Activated CD4-positive, alpha-beta memory T cell treated with anti-CD3 and anti-CD28 coated beads, Interleukin-2, amount 10 ng/mL, durations not matched to agents 7 days and 5 days (primary cell): ENCODE measurements at regions of chr11 and their contacts with region 1.

Region 1: GRCh38 chr11:114180301-114181055 is 115.7 kb upstream of the NNMT start:
- DNase-seq: no peak
- H3K4me3 Mint-ChIP-seq: no peak overlapping the region
- H3K27ac Mint-ChIP-seq: no peak overlapping the region
- H3K4me1 Mint-ChIP-seq: peaks cover 70% of the 10 kb centered on the region
- H3K27me3 Mint-ChIP-seq: peaks cover 1% of the 10 kb centered on the region

Region 2: DNA sequence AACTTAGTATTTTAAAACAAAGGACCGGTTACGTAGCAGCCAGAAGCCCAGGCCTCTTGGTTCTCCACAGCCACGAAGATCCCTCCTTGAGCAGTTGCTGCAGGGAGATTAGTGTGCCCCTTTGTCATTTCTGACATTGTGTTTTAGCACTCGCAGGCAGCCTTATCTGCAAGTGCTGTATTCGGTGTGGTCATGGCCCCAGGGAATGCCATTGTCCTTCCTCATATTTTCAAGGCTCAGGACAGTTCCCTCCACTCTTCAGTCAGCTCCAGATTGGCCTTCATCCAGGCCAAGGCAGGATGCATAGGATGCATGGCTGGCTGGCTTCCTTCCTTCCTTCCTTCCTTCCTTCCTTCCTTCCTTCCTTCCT is 32.5 kb before region 1 on chr11:
- CTCF ChIA-PET with region 1: no interaction called
- POLR2A ChIA-PET with region 1: no interaction called
- DNase-seq: no peak
- H3K4me3 Mint-ChIP-seq: no peak overlapping the region
- H3K27ac Mint-ChIP-seq: no peak overlapping the region
- H3K4me1 Mint-ChIP-seq: peaks cover 31% of the 10 kb centered on the region
- H3K27me3 Mint-ChIP-seq: peaks cover 14% of the 10 kb centered on the region

Region 3: DNA sequence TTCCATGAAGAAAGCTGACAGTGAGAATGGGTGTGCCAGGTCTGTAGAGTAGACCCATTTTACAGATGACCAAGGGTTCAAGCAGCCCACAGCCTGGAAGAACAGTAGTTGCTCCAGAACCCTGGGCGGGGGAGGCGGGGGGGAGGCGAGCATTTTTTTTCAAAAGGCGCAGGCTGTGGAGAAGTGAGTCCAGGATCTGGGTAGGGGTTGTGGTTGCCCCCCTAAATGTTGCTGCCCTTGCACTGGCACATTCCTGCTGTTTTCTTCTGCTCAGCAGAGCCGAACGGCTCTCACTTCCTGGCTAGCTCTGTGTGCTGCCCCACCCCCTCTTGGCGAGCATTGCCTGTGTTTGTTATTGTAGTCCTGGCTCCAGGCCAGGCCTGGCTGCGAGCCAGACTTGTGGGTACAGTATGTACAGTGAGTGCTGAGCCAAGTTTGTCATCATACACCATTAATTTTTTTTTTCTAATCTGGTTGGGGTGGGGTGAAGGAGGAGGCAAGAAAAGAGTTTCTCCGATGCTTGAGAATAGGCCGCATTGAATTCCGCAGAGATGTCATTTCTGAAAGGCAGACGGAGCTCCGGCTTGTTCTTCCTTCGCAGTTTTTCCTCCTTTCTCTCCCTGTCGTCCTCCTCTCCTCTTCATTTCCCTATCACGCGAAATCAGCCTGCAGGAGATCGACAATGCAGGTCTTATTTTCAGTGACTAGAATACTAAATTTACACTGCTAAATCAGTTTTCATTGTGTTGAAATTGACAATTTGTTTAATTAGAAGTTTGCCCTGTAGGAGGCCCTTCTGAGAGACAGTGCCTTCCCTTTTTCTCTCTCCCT is 20.5 kb before region 1 on chr11:
- CTCF ChIA-PET with region 1: interaction called, 5 read pairs
- POLR2A ChIA-PET with region 1: interaction called, 17 read pairs
- DNase-seq: peak; percentile 97
- H3K4me3 Mint-ChIP-seq: peak overlapping the region; percentile 49
- H3K27ac Mint-ChIP-seq: peak overlapping the region; percentile 75
- H3K4me1 Mint-ChIP-seq: peaks cover 49% of the 10 kb centered on the region
- H3K27me3 Mint-ChIP-seq: peaks cover 3% of the 10 kb centered on the region

Region 4: DNA sequence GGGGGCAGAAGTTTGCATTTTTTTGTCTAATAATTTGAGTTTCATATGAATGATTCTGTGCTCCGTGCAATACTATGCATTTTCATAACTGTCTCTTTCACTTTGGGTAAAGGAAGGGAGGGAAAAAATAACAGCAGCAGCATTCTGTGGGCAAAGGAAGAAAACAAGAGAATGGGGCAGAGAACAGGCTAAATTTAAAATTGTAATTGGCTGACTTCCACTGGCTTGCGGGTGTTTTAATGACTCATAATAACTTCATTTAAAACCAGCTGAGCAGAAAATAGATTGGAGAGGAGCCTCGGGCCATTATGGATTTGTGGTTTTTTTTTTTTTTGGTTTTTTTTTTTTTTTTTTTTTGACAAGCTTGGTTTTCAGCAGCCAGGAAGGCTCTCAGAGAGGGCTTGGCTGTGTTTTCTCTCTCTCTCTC is 13.6 kb before region 1 on chr11:
- CTCF ChIA-PET with region 1: interaction called, 30 read pairs
- POLR2A ChIA-PET with region 1: interaction called, 121 read pairs
- DNase-seq: no peak
- H3K4me3 Mint-ChIP-seq: no peak overlapping the region
- H3K27ac Mint-ChIP-seq: peak overlapping the region; percentile 73
- H3K4me1 Mint-ChIP-seq: peaks cover 61% of the 10 kb centered on the region
- H3K27me3 Mint-ChIP-seq: peaks cover 2% of the 10 kb centered on the region

Region 5: GRCh38 chr11:114192841-114193389 is 12.4 kb after region 1 on chr11:
- CTCF ChIA-PET with region 1: interaction called, 22 read pairs
- POLR2A ChIA-PET with region 1: interaction called, 20 read pairs
- DNase-seq: no peak
- H3K4me3 Mint-ChIP-seq: no peak overlapping the region
- H3K27ac Mint-ChIP-seq: no peak overlapping the region
- H3K4me1 Mint-ChIP-seq: peaks cover 16% of the 10 kb centered on the region
- H3K27me3 Mint-ChIP-seq: no peaks in the 10 kb centered on the region

Region 6: DNA sequence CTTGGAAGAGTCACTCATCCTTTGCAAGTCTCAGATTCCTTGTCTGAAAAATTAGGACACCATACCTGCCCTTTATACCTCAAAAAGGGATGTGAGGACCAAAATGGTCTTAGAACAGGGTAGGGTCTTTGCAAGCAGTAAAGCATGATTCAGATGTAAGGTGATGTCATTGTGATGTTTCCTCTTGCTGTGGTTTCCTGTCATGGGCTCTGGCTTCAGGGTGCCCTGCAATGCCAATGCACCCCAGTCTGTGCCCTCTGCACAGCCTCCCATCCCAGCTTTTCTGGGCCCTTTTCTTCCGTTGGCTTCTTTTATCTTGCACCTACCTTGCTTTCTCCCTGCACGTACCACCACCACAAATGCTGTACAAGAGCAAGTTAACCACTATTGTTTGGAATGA is 27.9 kb after region 1 on chr11:
- CTCF ChIA-PET with region 1: interaction called, 4 read pairs
- POLR2A ChIA-PET with region 1: interaction called, 14 read pairs
- DNase-seq: peak; percentile 62
- H3K4me3 Mint-ChIP-seq: no peak overlapping the region
- H3K27ac Mint-ChIP-seq: peak overlapping the region; percentile 74
- H3K4me1 Mint-ChIP-seq: peaks cover 57% of the 10 kb centered on the region
- H3K27me3 Mint-ChIP-seq: peaks cover 6% of the 10 kb centered on the region

Region 7: DNA sequence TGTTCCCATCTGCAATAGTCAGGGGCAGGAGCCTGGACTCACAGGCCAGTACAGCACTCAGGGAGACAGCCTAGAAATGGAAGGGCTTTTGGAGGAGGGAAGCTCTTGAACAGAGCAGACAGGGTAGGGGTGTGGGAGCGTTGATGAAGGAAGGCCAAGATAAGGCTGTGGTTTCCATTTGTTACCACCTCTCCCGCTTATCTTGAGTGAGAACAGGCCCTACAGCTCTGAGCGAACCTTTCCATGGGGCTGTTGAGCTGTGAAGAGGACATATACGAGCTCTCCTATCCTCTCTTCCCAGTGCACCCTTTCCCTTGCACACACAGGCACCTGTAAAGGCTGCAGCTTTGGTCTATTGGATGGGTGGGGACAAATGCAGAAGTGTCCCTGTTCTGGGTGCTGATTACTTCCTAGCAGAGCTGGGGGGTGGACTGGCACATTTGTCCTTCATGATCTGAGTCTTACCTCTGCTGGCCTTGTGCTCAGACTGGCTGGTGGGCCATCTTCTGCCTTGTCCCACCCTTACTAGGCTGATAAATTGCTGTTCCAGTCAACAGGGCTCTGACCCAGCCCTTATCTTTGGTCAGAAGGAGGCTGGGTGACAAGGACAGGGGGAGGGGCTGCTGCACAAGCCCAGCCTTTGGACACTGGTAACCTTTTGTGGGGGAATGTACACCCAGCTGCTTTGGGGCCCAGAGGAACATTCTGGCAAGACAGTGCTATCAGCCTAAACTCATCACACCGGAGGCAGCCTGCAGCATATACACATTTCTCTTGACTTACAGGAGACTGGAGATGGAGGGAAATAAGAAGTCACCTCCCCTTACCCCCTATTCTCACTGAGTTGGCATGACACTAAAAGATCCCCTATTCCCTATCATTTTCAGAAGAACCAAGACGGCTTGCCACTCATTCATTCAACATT is 35.7 kb after region 1 on chr11:
- CTCF ChIA-PET with region 1: interaction called, 6 read pairs
- POLR2A ChIA-PET with region 1: interaction called, 11 read pairs
- DNase-seq: no peak
- H3K4me3 Mint-ChIP-seq: peak overlapping the region; percentile 37
- H3K27ac Mint-ChIP-seq: peak overlapping the region; percentile 85
- H3K4me1 Mint-ChIP-seq: peaks cover 67% of the 10 kb centered on the region
- H3K27me3 Mint-ChIP-seq: peaks cover 7% of the 10 kb centered on the region

Region 8: DNA sequence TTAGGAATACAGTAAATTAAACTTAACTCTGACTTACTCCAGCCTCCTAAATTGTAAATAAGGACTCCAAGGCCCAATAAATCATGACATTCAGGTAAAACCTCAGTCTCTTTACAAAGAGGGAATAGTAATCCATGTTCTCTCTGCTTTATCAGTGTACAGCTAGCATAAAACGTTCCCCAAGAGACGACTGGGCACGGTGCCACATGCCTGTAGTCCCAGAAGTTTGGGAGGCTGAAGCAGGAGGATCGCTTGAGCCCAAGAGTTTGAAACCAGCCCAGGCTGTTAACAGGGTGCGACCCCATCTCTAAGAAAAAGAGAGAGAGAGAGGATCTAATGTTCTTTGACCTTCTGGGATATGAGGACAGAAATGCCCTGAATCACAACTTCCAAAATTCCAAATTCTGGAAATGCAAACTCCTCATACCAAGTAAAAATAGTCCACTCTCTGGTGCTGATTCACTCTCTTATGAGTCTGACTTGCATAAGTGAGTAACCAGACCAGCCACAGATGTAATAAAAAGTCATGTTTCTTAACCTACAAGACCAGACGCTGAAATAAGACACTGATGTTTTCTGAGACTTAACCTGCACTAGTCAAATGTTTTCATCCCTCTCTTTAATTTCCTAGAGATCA is 141.3 kb after region 1 on chr11:
- CTCF ChIA-PET with region 1: no interaction called
- POLR2A ChIA-PET with region 1: no interaction called
- DNase-seq: no peak
- H3K4me3 Mint-ChIP-seq: no peak overlapping the region
- H3K27ac Mint-ChIP-seq: no peak overlapping the region
- H3K4me1 Mint-ChIP-seq: peaks cover 4% of the 10 kb centered on the region
- H3K27me3 Mint-ChIP-seq: peaks cover 15% of the 10 kb centered on the region

Region 9: GRCh38 chr11:114563077-114563476 is 382.6 kb after region 1 on chr11:
- CTCF ChIA-PET with region 1: no interaction called
- POLR2A ChIA-PET with region 1: no interaction called
- DNase-seq: no peak
- H3K4me3 Mint-ChIP-seq: no peak overlapping the region
- H3K27ac Mint-ChIP-seq: no peak overlapping the region
- H3K4me1 Mint-ChIP-seq: no peaks in the 10 kb centered on the region
- H3K27me3 Mint-ChIP-seq: peaks cover 2% of the 10 kb centered on the region